ENCODE measurements at regions of chr20 and their contacts with region 1.

Region 1: DNA sequence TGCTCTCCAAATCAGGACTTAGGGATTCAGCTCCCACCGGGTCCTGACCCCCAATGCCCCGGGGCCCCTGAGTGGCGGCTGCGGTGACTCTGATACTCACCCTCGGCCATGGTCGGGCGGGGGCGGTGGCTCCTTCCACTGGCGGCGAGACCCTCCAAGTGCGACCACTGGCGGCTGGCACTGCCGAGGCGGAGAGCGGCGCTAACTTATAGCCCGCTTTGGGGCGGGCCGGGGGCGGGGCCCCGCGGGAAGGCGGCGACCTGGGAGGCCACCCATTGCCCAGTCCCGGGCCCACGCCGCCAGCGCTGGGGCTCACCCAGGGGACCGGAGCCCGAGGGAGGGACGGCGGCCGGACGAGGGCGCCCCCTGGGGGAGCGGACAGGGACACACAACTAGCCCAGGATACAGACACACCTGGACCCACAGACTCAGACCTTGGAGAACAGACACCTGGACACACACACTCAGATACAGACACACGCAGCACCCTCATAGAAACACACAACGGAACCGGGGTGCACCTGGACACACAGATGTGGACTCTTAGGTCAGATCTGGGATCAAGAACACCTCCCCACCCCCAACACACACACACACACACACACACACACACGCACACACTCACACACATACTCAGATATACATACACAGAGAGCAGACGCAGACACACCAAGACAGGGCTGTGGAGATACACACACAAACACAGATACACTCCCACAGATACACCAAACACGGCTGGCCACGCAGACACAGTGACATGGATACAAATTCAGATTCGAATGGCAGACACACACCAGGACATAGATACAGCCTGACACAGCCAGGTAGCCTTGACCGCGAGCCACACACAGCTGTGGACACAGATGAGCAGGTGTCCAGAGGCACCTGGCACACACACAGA is at the start of gene TGM2:
- DNase-seq: peak; percentile 65 to 71
- ATAC-seq: peak; percentile 75 to 85
- H3K4me3 ChIP-seq: peak within 1 kb of the TSS; percentile 45 to 70 (median 58)
- H3K27ac ChIP-seq: peak within 1 kb of the TSS; percentile 51 to 82 (median 68)
- H3K4me1 ChIP-seq: peaks cover 14 to 20% of the 10 kb centered on the region in 2 donors
- H3K27me3 ChIP-seq: no peaks in the 10 kb centered on the region
- CTCF ChIP-seq: peak; percentile 86 to 99 (median 96)
- POLR2A ChIP-seq: peak; percentile 34 to 75
- total RNA-seq, gene TGM2: 12.8 to 152 (median 58.4) TPM

Region 2: GRCh38 chr20:37564388-37565133 is 600.8 kb before region 1 on chr20:
- in situ Hi-C with region 1: no loop called
- intact Hi-C with region 1: loop called (anchors 1 kb)
- DNase-seq: no peak
- ATAC-seq: peak in 1 of 2 donors; percentile 78
- H3K4me3 ChIP-seq: peak overlapping the region in 1 of 4 donors; percentile 28
- H3K27ac ChIP-seq: no peak overlapping the region
- H3K4me1 ChIP-seq: peaks cover 0 to 10% of the 10 kb centered on the region in 2 donors
- H3K27me3 ChIP-seq: peaks cover 16 to 23% (median 16%) of the 10 kb centered on the region in 3 donors
- CTCF ChIP-seq: peak; percentile 78 to 91 (median 87)
- POLR2A ChIP-seq: no peak

Region 3: DNA sequence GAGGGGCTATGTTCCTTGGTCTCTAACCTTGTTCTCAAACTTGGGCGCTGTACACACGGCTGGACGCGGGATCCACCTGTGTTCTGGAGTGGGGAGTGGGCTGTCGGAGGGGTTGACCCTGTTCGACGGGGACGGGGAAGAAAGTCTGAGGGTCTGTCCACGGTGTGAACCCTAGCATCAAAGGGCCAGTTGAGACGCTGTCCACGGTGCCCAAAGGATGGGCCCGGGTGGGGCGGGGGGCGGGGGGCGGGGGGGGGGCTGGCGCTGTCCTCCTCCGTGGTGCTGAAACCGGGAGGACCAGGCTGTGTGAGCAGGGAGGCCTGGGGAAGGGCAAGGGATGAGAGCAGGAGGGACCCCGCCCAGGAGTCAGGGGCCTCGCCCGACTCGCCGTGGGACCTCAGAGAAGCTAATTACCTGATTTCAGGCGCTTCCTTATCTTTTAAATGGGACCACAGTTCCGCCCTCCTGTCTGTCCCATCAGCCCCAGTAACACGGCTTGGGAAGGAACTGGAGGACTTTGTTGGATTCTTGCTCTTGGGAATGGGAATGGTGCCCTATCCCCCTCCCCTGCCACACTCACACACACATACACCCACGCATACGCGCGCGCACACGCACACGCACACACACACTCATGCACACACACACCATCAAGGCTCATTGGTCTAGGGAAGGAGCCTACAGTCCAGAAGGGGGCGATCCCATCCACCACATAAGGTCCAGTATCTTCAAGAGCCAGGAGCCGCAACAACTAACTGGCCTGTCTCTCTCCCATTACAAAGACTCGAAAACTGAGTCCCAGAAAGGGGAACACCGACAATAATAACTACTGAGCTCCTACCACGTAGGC is 263.5 kb before region 1 on chr20:
- in situ Hi-C with region 1: no loop called
- intact Hi-C with region 1: loop called (anchors 10 kb)
- DNase-seq: peak; percentile 17 to 45
- ATAC-seq: peak; percentile 66 to 75
- H3K4me3 ChIP-seq: peak overlapping the region in 1 of 4 donors; percentile 46
- H3K27ac ChIP-seq: no peak overlapping the region
- H3K4me1 ChIP-seq: peaks cover 0 to 6% of the 10 kb centered on the region in 2 donors
- H3K27me3 ChIP-seq: peaks cover 38 to 61% (median 44%) of the 10 kb centered on the region in 3 donors
- CTCF ChIP-seq: peak in 4 of 5 experiments; percentile 25 to 68 (median 38)
- POLR2A ChIP-seq: no peak

Region 4: DNA sequence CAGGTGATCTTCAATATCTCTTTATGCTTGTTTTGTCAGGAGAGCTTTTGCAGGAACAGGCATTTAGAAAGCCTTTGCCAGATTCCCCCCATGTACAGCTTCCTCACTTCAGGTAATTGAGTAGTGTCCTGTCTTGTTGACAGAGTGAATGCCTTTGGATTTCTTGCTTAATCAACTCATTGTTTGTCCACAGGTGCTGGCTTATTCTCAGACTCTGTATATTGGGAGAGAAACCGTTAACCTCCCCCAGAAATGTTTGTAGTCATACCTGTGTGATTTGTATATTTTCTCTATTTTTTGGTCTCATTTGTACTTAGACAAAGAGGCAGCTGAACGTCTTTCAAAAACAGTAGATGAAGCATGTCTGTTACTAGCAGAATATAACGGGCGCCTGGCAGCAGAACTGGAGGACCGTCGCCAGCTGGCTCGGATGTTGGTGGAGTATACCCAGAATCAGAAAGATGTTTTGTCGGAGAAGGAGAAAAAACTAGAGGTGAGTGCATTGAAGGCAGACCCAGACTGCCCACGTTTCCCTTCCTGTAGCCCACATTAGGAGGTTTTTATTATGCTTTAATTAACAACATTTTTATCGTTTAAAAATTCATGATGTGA is 99.5 kb before region 1 on chr20:
- in situ Hi-C with region 1: loop called in 1 of 4 experiments (anchors 5 kb)
- intact Hi-C with region 1: no loop called
- DNase-seq: no peak
- ATAC-seq: no peak
- H3K4me3 ChIP-seq: no peak overlapping the region
- H3K27ac ChIP-seq: peak overlapping the region; percentile 78 to 91 (median 84)
- H3K4me1 ChIP-seq: peaks cover 32 to 41% of the 10 kb centered on the region in 2 donors
- H3K27me3 ChIP-seq: no peaks in the 10 kb centered on the region
- CTCF ChIP-seq: no peak
- POLR2A ChIP-seq: no peak

Region 5: DNA sequence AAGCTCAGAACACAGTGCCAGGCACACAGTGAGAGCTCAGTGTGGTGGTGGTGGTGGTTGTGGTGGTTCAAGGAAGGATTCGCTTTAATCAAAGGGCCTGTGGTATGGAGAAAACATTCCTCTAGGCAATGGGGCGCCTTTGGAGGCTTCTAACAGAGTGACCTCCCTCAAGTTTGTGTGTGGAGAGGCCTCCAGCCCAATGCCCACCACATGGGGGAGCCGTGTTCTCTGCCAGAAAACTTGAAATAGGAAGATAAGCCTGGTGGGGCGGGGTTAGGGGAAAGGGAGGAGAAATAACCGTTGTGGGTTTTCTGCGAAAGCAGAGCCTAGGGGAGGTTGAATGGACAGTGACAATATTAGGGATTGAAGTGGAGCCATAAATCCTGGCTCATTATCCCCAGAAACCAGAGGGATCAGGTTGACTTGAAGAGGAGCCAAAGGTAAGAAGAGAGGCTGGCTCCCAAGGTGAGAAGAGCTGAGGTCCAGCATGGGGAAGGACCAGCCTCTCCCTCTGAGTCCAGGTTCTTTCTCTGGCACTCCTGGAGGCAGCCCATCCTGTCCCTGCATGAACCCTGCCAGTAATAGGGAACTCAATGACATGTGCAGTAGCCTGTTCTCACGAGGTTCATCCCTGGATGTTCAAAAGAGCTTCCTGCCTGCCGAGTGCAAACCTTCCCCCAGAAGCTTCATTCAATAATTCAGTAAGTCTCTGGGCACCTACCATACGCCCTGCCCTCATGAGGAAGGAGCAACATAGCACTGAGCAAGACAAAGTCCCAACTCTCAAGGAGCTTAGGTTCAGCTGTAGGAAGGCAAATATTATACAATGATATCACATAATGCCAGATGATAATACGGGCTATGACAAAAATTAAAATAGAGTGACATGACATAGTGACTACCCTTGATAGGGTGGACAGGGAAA is 51.7 kb before region 1 on chr20:
- in situ Hi-C with region 1: no loop called
- intact Hi-C with region 1: loop called (anchors 2 kb)
- DNase-seq: peak; percentile 81 to 87
- ATAC-seq: peak; percentile 40 to 49
- H3K4me3 ChIP-seq: no peak overlapping the region
- H3K27ac ChIP-seq: peak overlapping the region; percentile 43 to 94 (median 68)
- H3K4me1 ChIP-seq: peaks cover 57 to 63% of the 10 kb centered on the region in 2 donors
- H3K27me3 ChIP-seq: no peaks in the 10 kb centered on the region
- CTCF ChIP-seq: peak in 1 of 5 experiments; percentile 8
- POLR2A ChIP-seq: no peak

Measured in gastrocnemius medialis (tissue), 4 donors.